ENCODE measurements at regions of chr6 and their contacts with region 1.

Region 1: GRCh38 chr6:70221025-70221714 is 81.7 kb downstream of the COL9A1 start:
- DNase-seq: peak; percentile 20
- ATAC-seq: peak; percentile 55
- H3K4me3 Mint-ChIP-seq: no peak overlapping the region
- H3K27ac Mint-ChIP-seq: no peak overlapping the region
- H3K4me1 Mint-ChIP-seq: no peaks in the 10 kb centered on the region
- H3K27me3 Mint-ChIP-seq: peaks cover 5% of the 10 kb centered on the region

Region 2: GRCh38 chr6:70231311-70231710 is 10.1 kb after region 1 on chr6:
- CTCF ChIA-PET with region 1: interaction called, 52 read pairs
- POLR2A ChIA-PET with region 1: no interaction called
- intact Hi-C with region 1: no loop called
- DNase-seq: no peak
- ATAC-seq: no peak
- H3K4me3 Mint-ChIP-seq: no peak overlapping the region
- H3K27ac Mint-ChIP-seq: no peak overlapping the region
- H3K4me1 Mint-ChIP-seq: no peaks in the 10 kb centered on the region
- H3K27me3 Mint-ChIP-seq: peaks cover 2% of the 10 kb centered on the region

Region 3: DNA sequence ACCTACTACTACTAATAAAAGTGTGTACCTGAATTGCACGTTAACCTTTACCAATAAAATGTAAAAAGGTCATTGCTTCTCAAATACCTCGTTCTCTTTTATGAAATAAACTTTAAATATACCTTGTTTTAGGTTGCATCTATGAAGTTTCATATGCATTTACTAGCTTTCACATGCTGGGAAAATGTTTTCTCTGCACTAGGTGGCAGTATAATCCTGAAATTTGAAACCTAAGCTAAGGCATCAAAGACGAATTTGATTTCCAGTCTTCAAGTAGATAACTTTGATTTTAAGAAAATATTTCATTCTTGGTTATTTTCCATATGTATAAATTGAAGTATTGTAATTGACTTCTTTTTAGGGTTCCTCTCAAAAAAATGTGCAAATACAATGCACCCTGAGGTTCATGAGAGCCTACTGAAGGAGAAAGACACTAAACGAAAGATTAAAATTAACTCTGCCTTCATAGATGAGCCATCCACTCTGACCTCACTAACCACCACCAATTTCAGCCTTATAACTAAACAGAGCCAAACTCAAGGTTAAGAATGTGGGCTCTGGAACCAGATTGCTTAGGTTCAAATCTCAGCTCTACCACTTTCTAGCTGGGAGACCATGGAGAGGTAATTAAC is 89.0 kb after region 1 on chr6:
- CTCF ChIA-PET with region 1: interaction called, 25 read pairs
- POLR2A ChIA-PET with region 1: no interaction called
- intact Hi-C with region 1: loop called in 1 of 2 experiments (anchors 2 kb)
- DNase-seq: no peak
- ATAC-seq: no peak
- H3K4me3 Mint-ChIP-seq: no peak overlapping the region
- H3K27ac Mint-ChIP-seq: no peak overlapping the region
- H3K4me1 Mint-ChIP-seq: peaks cover 5% of the 10 kb centered on the region
- H3K27me3 Mint-ChIP-seq: peaks cover 23% of the 10 kb centered on the region

Region 4: DNA sequence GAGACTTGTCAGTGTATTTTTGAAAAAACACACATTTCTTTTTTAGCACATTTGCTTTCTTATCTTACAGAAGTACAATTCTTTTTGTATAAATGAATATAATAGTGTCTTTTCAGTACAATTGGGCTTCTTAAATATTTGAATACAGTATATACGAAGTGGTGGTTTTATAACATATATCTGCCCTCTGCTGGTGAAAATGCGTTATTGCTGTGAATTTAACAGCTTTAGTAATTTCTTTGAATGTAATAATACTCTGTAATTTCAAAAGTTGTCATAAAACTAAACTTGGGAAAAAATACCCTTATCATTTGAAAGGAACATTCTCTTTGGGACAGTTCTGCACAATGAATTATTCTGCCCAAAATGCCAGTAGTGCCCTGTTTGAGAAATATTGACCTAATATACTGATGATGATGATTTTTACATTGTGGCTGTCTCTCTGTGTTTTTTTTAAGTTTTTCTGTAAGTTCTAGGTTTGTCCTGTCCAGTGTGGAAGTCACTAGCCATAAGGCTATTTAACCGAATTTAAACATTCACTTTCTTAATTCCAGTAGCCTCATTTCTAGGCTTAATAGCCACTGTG is 465.5 kb after region 1 on chr6:
- CTCF ChIA-PET with region 1: interaction called, 9 read pairs
- POLR2A ChIA-PET with region 1: no interaction called
- intact Hi-C with region 1: loop called in 1 of 2 experiments (anchors 2 kb)
- DNase-seq: no peak
- ATAC-seq: no peak
- H3K4me3 Mint-ChIP-seq: no peak overlapping the region
- H3K27ac Mint-ChIP-seq: no peak overlapping the region
- H3K4me1 Mint-ChIP-seq: peaks cover 38% of the 10 kb centered on the region
- H3K27me3 Mint-ChIP-seq: no peaks in the 10 kb centered on the region

Region 5: GRCh38 chr6:70790483-70791224 is 569.5 kb after region 1 on chr6:
- CTCF ChIA-PET with region 1: no interaction called
- POLR2A ChIA-PET with region 1: no interaction called
- intact Hi-C with region 1: no loop called
- DNase-seq: no peak
- ATAC-seq: no peak
- H3K4me3 Mint-ChIP-seq: no peak overlapping the region
- H3K27ac Mint-ChIP-seq: no peak overlapping the region
- H3K4me1 Mint-ChIP-seq: no peaks in the 10 kb centered on the region
- H3K27me3 Mint-ChIP-seq: no peaks in the 10 kb centered on the region

Region 6: GRCh38 chr6:70955441-70956190 is 734.4 kb after region 1 on chr6:
- CTCF ChIA-PET with region 1: interaction called, 4 read pairs
- POLR2A ChIA-PET with region 1: no interaction called
- intact Hi-C with region 1: loop called in 1 of 2 experiments (anchors 2 kb)
- DNase-seq: peak; percentile 94
- ATAC-seq: peak; percentile 95
- H3K4me3 Mint-ChIP-seq: peak overlapping the region; percentile 64
- H3K27ac Mint-ChIP-seq: no peak overlapping the region
- H3K4me1 Mint-ChIP-seq: peaks cover 14% of the 10 kb centered on the region
- H3K27me3 Mint-ChIP-seq: peaks cover 52% of the 10 kb centered on the region